Activated CD4-positive, alpha-beta memory T cell treated with anti-CD3 and anti-CD28 coated beads, Interleukin-2, amount 10 ng/mL, durations not matched to agents 7 days and 5 days (primary cell): ENCODE measurements at regions of chr7 and their contacts with region 1.

Region 1: DNA sequence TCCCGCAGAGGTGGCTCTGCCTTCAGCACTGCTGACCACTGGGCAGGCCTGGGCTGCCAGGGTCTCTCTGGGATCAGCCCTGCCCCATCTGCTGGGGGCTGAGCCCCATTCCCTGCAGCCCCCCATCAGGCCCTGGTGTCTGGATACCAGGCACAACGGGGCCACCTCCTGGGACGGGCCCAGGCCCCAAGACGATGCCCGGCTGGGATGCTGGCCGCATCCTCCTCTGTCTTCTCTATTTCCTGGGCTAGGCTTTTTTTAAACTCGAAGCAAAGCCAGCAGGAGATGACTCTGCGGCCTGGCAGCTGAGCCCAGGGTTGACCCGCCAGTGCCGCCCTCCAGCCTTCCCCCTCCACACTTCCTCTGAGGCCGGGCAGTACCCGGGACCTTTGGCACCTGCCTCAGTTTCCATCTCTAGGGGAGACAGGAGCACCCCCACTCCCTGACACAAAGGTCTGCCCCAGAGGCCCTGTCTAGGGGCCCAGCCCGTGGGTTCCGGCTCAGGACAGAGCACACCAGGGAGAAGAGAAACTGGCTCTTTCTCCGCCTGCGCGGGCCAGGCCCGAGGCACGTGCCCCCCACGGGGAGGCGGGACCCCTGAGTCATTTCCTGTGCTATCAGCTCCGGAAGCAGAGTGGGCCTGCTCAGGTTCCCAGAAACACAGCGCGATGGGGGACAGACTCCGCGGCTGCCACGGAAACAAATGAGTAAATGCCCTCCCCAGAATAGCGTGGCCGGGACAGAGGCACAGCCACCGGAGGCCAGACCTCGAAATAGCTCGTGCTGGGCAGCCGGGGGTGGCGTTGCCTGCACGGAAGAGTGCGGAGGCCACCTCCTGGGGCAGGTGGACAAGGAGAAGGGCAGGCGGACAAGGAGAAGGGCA is 84.6 kb upstream of the PDGFA start:
- DNase-seq: peak; percentile 96
- H3K4me3 Mint-ChIP-seq: peak overlapping the region; percentile 94
- H3K27ac Mint-ChIP-seq: peak overlapping the region; percentile 100
- H3K4me1 Mint-ChIP-seq: peaks cover 63% of the 10 kb centered on the region
- H3K27me3 Mint-ChIP-seq: no peaks in the 10 kb centered on the region

Region 2: GRCh38 chr7:584122-584465 is 20.1 kb before region 1 on chr7:
- CTCF ChIA-PET with region 1: interaction called, 8 read pairs
- POLR2A ChIA-PET with region 1: interaction called, 96 read pairs
- DNase-seq: peak; percentile 94
- H3K4me3 Mint-ChIP-seq: peak overlapping the region; percentile 79
- H3K27ac Mint-ChIP-seq: peak overlapping the region; percentile 88
- H3K4me1 Mint-ChIP-seq: peaks cover 38% of the 10 kb centered on the region
- H3K27me3 Mint-ChIP-seq: no peaks in the 10 kb centered on the region

Region 3: DNA sequence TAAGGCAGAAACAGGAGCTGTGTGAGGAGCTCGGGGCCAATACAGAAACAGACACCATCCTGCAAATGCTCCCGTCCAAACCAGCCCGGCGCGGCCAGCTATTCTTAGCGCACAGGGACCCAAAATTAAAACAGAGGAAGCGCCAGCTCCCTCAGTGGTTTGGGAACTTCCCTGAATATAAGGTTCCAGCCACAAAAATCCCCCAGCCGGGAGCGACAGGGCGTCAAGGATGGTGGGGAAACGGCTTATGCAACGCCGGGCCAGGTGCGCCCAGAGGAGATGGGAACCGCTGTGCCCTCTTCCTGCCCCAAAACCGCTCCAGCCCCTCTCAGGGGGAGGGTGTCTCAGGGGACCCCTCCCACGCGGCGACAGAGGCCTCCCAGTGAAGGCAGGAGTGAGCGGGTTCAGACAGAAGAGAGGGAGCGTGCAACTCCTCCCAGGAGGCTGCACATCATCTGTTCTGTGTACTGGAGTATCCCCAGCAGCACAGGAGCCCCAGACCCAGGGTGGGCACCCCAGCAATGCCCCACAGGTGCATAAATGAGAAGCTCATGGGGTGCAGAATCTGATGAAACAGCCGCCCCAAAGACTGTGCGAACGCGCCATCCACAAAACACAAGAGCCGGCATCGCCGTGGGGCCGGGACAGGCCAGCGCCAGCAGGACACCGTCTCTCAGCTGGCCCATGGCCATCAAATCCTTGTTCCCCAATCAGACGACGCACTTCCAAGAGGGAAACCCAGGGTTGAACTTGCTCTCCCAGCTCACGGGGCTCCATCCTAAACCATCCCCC is 10.7 kb before region 1 on chr7:
- CTCF ChIA-PET with region 1: no interaction called
- POLR2A ChIA-PET with region 1: interaction called, 12 read pairs
- DNase-seq: no peak
- H3K4me3 Mint-ChIP-seq: no peak overlapping the region
- H3K27ac Mint-ChIP-seq: no peak overlapping the region
- H3K4me1 Mint-ChIP-seq: peaks cover 8% of the 10 kb centered on the region
- H3K27me3 Mint-ChIP-seq: no peaks in the 10 kb centered on the region

Region 4: DNA sequence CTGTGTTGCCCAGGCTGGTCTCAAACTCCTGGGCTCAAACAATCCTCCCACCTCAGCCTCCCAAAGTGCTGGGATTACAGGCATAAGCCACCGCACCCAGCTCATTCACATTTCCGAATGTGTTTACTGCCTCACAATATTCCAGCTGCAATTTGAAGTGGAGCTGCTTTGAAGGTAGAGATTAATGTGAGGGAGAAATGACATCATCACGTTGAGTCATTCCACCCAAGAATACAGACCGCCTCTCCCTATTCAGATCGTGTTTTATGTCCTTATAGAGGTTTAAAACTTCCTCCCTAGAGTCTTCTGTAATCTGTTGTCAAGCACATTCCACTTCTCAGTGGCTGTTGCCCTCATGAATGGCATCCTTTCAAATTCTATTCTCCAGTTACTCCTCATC is 15.8 kb after region 1 on chr7:
- CTCF ChIA-PET with region 1: interaction called, 7 read pairs
- POLR2A ChIA-PET with region 1: interaction called, 113 read pairs
- DNase-seq: no peak
- H3K4me3 Mint-ChIP-seq: no peak overlapping the region
- H3K27ac Mint-ChIP-seq: peak overlapping the region; percentile 100
- H3K4me1 Mint-ChIP-seq: peaks cover 45% of the 10 kb centered on the region
- H3K27me3 Mint-ChIP-seq: no peaks in the 10 kb centered on the region